ENCODE measurements at regions of chr15 and their contacts with region 1.

Region 1: GRCh38 chr15:72599855-72600464 is 54.5 kb upstream of the GOLGA6B start:
- DNase-seq: peak in 5 of 9 donors; percentile 16 to 34 (median 21)
- ATAC-seq: peak; percentile 57
- H3K4me3 ChIP-seq: no peak overlapping the region
- H3K4me3 Mint-ChIP-seq: no peak overlapping the region
- H3K27ac ChIP-seq: no peak overlapping the region
- H3K27ac Mint-ChIP-seq: no peak overlapping the region
- H3K4me1 ChIP-seq: no peaks in the 10 kb centered on the region
- H3K4me1 Mint-ChIP-seq: peaks cover 0 to 2% (median 0%) of the 10 kb centered on the region in 7 donors
- H3K27me3 ChIP-seq: no peaks in the 10 kb centered on the region
- H3K27me3 Mint-ChIP-seq: peaks cover 0 to 9% (median 0%) of the 10 kb centered on the region in 5 donors

Region 2: DNA sequence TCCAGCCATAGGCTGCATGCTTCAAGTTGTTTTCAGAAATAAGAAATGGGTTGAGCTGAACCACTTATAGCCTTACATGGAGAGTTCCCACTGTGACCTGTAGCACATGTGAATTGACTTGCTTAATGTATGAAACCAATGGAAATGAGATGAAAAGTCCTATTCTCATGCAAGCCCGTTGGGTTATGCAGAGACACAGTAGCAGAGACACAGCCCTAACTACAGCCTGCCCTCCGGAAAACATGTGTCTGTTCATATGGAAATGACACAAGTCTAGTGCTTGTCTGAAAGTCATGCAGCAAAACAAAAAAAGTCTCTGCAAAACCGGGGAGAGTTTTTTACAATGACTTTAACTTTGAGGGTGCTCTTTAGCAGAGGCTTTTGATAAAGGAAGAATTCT is 71.6 kb after region 1 on chr15:
- CTCF ChIA-PET with region 1: interaction called, 8 read pairs
- POLR2A ChIA-PET with region 1: no interaction called
- intact Hi-C with region 1: loop called (anchors 10 kb)
- DNase-seq: no peak
- ATAC-seq: no peak
- H3K4me3 ChIP-seq: no peak overlapping the region
- H3K4me3 Mint-ChIP-seq: no peak overlapping the region
- H3K27ac ChIP-seq: no peak overlapping the region
- H3K27ac Mint-ChIP-seq: no peak overlapping the region
- H3K4me1 ChIP-seq: peaks cover 0 to 3% of the 10 kb centered on the region in 2 donors
- H3K4me1 Mint-ChIP-seq: peaks cover 0 to 10% (median 5%) of the 10 kb centered on the region in 7 donors
- H3K27me3 ChIP-seq: no peaks in the 10 kb centered on the region
- H3K27me3 Mint-ChIP-seq: peaks cover 5 to 25% (median 9%) of the 10 kb centered on the region in 5 donors

Region 3: DNA sequence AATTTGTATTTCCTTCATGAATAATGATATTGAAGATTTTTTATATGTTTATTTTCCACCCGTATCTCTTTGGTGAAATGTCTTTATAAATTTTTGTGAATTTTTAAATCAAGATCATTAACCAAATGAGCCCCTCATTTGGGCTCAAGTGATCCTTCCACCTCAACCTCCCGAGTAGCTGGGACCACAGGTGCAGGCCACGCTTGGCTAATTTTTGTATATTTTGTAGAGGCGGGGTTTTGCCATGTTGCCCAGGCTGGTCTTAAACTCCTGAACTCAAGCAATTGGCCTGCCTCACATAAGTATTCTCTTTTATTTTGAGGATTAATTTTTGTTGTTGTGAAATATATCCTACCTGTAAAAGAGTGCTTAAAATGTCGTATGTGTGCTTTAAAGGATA is 91.0 kb after region 1 on chr15:
- CTCF ChIA-PET with region 1: no interaction called
- POLR2A ChIA-PET with region 1: no interaction called
- intact Hi-C with region 1: no loop called
- DNase-seq: no peak
- ATAC-seq: no peak
- H3K4me3 ChIP-seq: no peak overlapping the region
- H3K4me3 Mint-ChIP-seq: no peak overlapping the region
- H3K27ac ChIP-seq: no peak overlapping the region
- H3K27ac Mint-ChIP-seq: no peak overlapping the region
- H3K4me1 ChIP-seq: peaks cover 0 to 5% of the 10 kb centered on the region in 2 donors
- H3K4me1 Mint-ChIP-seq: peaks cover 8 to 35% (median 19%) of the 10 kb centered on the region in 7 donors
- H3K27me3 ChIP-seq: no peaks in the 10 kb centered on the region
- H3K27me3 Mint-ChIP-seq: no peaks in the 10 kb centered on the region

Region 4: DNA sequence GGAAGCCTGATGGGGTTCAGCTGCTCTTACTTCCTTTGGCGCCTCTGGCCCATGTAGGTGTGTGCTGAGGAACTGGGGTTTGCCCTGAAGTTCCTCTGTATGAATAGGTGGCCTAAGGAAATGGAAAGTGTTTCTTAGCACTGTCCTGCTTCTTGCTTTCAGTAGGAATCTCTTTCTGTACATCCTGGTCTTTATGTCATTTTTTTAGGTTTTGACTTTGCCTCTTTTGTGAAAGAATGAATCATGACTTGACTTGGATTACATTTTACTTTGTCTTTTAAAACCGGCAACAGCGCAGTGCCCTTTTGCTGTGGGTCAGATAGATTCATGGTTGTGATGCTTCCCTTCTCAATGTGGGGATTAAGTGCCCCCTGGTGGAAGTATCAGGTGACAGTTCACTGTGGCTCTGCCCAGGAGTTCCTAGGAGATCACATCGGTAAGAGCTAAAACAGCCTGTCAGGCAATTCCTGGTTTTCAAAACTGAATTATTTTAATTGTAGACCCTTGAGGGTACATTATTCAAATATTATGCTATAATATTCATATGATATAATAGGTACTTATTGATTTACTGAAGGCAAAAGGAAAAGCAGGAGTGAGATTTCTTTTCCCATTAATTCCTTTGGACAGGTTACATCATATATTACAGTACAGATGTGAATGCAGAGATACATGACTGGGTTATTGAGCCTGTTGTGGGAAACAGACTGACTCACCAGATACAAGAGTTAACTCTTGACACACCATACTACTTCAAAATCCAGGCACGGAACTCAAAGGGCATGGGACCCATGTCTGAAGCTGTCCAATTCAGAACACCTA is 673.4 kb after region 1 on chr15:
- CTCF ChIA-PET with region 1: interaction called, 3 read pairs
- POLR2A ChIA-PET with region 1: no interaction called
- intact Hi-C with region 1: loop called in 1 of 2 experiments (anchors 5 kb)
- DNase-seq: peak in 7 of 9 donors; percentile 3 to 44 (median 32)
- ATAC-seq: peak; percentile 71
- H3K4me3 ChIP-seq: no peak overlapping the region
- H3K4me3 Mint-ChIP-seq: peak overlapping the region in 4 of 10 donors; percentile 4 to 63 (median 26)
- H3K27ac ChIP-seq: no peak overlapping the region
- H3K27ac Mint-ChIP-seq: no peak overlapping the region
- H3K4me1 ChIP-seq: no peaks in the 10 kb centered on the region
- H3K4me1 Mint-ChIP-seq: peaks cover 0 to 4% (median 0%) of the 10 kb centered on the region in 7 donors
- H3K27me3 ChIP-seq: no peaks in the 10 kb centered on the region
- H3K27me3 Mint-ChIP-seq: no peaks in the 10 kb centered on the region